ENCODE measurements at regions of chr13 and their contacts with region 1.

Region 1: DNA sequence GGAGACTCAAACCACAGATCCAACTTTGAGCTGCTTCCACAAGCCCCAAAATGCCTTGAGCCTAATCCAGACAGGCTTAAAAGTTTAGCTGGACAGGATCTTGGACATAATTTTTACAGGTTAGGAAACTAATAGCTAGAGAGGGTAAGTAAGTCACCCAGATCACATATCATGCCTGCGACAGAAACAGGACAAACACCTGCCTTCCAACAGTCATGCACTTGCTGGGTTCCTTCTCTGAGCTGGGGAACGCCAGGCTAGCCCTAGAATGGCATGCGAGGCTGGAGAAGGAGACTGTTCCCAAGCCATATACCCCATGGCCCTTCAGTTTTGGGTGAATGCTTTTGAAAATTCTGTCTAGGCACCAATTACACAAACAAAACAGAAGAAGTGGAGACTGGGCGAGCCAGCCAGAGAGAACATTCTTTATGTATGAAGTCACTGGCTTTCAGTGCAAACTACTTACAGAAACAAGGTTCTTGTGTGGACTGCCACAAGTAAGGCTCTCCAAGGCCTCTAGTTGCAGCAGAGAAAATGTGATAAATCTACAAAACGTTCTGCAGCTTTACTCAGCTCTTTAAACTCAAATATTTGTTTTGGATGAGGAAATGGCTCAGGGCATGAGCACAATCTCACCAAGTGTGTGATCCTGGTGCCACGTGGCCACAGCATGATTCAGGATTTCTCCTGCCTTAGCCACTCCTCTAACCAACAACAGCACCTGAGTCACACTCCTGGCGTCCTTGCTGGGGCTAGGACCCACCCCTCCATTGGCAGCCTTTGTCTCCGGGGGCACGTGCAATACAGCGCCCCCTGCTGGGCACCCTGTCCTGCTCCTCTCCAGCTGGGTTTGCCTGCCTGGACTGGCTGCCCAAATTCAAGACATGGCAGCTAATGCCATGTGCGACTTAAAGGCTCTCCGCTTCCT is 73.4 kb upstream of the UBL3 start:
- DNase-seq: peak; percentile 97

Region 2: DNA sequence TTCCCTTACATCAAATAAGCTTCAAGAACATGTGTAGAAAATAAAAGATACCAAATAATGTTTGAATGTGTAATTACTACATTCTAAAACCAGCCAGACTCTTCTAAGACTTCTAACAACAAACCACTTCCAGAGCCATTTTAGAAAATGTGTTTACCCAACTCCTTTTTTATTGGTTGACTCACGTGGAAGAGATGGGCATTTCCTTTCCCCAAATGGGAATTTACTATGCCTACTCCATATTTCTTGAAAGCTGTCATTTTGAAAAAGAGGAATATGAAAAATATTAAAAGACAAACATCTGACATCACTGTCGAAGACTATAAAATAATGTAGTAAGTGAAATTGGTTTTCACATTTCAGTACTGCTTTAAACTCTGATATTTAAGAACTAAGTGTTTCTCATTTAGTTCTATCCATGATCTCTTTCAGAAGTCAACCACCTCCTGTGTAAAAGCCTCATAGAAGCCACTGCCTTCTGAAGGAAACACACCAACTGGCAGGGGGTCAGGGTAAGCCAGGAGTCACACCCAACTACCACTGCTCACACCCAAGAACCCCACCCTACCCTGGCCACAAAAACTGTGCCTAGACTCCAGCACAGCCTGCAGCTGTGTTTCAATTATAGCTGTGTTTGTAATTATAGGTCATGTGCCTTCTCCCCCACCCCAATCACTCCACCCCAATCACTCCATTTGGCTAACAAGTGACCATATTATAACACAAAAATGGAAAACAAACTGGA is 160.2 kb before region 1 on chr13:
- in situ Hi-C with region 1: loop called (anchors 10 kb)
- DNase-seq: no peak

Region 3: DNA sequence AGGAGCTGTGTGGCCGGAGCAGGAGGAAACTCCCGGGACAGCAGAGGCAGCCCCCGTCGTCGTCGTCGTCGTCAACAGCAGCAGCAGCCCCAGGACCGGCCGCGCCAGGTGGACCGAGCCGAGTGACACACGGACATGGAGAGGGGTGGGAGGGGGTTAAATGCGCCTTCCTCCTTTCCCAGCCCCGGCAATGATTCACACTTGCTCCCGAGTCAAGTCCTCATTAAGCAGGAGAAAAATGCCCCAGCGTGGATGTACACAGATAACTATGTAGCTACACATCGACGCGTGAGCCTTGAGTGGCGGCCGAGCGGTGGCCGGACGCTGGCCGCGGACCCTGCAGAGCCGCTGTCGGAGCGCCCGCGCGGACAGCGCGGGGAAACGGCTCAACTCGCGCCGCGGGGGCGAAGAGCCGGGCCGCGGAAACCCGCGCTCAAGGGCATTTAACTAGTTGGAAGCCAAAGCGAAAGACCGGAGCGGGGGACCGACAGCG is 74.0 kb before region 1 on chr13:
- in situ Hi-C with region 1: loop called (anchors 10 kb)
- DNase-seq: peak; percentile 62

Measured in Caki2 (cell line).